ENCODE measurements at regions of chr10 and their contacts with region 1.

Region 1: GRCh38 chr10:80144067-80144695 is 11.7 kb downstream of the PLAC9 start:
- DNase-seq: peak in 1 of 9 donors; percentile 42
- ATAC-seq: peak; percentile 60
- H3K4me3 ChIP-seq: peak overlapping the region; percentile 56
- H3K4me3 Mint-ChIP-seq: peak overlapping the region; percentile 81 to 88 (median 86)
- H3K27ac ChIP-seq: peak overlapping the region; percentile 56
- H3K27ac Mint-ChIP-seq: peak overlapping the region; percentile 50 to 93 (median 71)
- H3K4me1 ChIP-seq: peaks cover 7 to 12% of the 10 kb centered on the region in 2 donors
- H3K4me1 Mint-ChIP-seq: peaks cover 14 to 25% (median 23%) of the 10 kb centered on the region in 7 donors
- H3K27me3 ChIP-seq: no peaks in the 10 kb centered on the region
- H3K27me3 Mint-ChIP-seq: peaks cover 0 to 12% (median 3%) of the 10 kb centered on the region in 5 donors

Region 2: GRCh38 chr10:79374312-79375191 is 769.6 kb before region 1 on chr10:
- CTCF ChIA-PET with region 1: interaction called, 7 read pairs
- POLR2A ChIA-PET with region 1: no interaction called
- intact Hi-C with region 1: loop called in 1 of 2 experiments (anchors 2 kb)
- DNase-seq: peak; percentile 39 to 78 (median 67)
- ATAC-seq: peak; percentile 85
- H3K4me3 ChIP-seq: no peak overlapping the region
- H3K4me3 Mint-ChIP-seq: no peak overlapping the region
- H3K27ac ChIP-seq: no peak overlapping the region
- H3K27ac Mint-ChIP-seq: peak overlapping the region in 1 of 9 donors; percentile 42
- H3K4me1 ChIP-seq: peaks cover 0 to 5% of the 10 kb centered on the region in 2 donors
- H3K4me1 Mint-ChIP-seq: peaks cover 0 to 11% (median 4%) of the 10 kb centered on the region in 7 donors
- H3K27me3 ChIP-seq: no peaks in the 10 kb centered on the region
- H3K27me3 Mint-ChIP-seq: peaks cover 0 to 30% (median 0%) of the 10 kb centered on the region in 5 donors

Region 3: DNA sequence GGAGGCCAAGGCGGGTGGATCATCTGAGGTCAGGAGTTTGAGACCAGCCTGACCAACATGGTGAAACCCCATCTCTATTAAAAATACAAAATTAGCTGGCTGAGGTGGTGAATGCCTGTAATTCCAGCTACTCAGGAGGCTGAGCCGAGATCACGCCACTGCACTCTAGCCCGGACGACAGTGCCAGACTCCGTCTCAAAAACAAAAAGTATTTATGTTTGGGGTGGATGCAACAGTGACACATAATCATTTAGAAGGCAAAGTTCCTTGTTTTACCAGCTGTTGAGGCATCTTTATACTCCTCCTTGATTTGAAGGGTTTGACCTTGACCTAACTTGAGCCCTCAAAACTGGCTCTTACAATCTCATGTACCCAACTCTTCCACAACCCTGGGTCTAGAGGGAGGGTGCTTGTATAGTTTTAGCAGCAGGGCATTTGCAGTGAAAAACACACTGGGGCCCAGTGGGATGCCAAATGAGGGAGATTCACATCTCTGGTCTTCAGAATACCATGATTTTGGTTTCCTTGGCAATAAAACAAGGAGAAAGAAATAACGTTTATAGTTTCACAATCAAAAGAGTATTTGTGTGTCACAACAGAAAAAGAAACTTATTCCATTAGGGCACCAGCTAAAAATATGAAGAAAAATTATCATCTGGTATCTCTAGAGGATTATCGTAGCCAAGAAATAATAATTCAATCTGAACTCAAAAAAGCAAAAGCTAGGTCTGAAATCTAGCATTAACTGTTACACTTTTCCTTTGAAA is 79.9 kb before region 1 on chr10:
- CTCF ChIA-PET with region 1: interaction called, 4 read pairs
- POLR2A ChIA-PET with region 1: no interaction called
- intact Hi-C with region 1: loop called in 1 of 2 experiments (anchors 2 kb)
- DNase-seq: no peak
- ATAC-seq: no peak
- H3K4me3 ChIP-seq: no peak overlapping the region
- H3K4me3 Mint-ChIP-seq: no peak overlapping the region
- H3K27ac ChIP-seq: no peak overlapping the region
- H3K27ac Mint-ChIP-seq: no peak overlapping the region
- H3K4me1 ChIP-seq: no peaks in the 10 kb centered on the region
- H3K4me1 Mint-ChIP-seq: no peaks in the 10 kb centered on the region
- H3K27me3 ChIP-seq: no peaks in the 10 kb centered on the region
- H3K27me3 Mint-ChIP-seq: peaks cover 0 to 5% (median 0%) of the 10 kb centered on the region in 5 donors

Region 4: DNA sequence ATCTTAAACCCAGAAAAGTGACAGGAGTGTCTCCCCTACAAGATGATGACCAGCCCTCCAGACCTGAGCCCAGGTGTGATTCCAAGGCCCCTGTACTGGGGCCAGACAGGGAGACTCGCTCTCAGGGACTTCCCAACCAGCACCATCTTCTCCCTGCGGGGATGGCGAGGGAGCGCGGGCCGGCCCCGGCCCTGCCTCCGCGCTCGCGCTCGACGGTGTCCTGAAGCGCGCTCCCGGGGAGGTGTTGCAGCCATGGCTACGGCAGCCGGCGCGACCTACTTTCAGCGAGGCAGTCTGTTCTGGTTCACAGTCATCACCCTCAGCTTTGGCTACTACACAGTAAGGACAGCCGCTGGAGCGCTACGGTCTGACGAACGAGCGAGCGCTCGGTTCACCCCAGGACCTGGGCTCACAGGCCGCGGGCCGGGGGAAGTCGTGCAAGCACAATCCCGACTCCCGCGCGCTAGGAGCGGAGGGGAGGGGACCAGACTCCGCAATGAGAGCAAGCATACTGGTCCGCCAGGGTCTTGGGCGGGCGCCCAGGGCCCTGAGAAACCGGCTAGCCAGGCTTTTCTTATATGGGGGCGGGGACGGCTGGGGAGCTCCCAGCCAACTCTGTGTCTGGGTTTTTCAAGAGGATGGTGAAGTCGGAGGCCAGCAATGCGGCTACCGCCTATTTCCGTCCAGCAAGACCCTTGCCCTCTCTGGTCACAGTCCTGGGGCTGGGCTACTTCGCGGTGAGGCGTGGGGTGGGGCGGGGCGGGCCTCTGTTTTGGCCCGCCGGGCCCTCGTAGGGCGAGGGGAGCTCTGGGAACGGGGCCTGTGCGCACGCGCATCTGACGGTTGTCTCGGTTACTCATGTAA is 65.5 kb before region 1 on chr10 and contains the start of gene TMEM254:
- CTCF ChIA-PET with region 1: interaction called, 3 read pairs
- POLR2A ChIA-PET with region 1: no interaction called
- intact Hi-C with region 1: loop called in 1 of 2 experiments (anchors 5 kb)
- DNase-seq: peak; percentile 79 to 87 (median 85)
- ATAC-seq: peak; percentile 87
- H3K4me3 ChIP-seq: peak within 1 kb of the TSS; percentile 88
- H3K4me3 Mint-ChIP-seq: peak within 1 kb of the TSS; percentile 90 to 100 (median 96)
- H3K27ac ChIP-seq: peak within 1 kb of the TSS; percentile 87
- H3K27ac Mint-ChIP-seq: peak within 1 kb of the TSS; percentile 88 to 99 (median 95)
- H3K4me1 ChIP-seq: peaks cover 6 to 12% of the 10 kb centered on the region in 2 donors
- H3K4me1 Mint-ChIP-seq: peaks cover 14 to 25% (median 20%) of the 10 kb centered on the region in 7 donors
- H3K27me3 ChIP-seq: no peaks in the 10 kb centered on the region
- H3K27me3 Mint-ChIP-seq: no peaks in the 10 kb centered on the region
- total RNA-seq, gene TMEM254: 7.3 to 19.6 (median 17.1) TPM

Region 5: DNA sequence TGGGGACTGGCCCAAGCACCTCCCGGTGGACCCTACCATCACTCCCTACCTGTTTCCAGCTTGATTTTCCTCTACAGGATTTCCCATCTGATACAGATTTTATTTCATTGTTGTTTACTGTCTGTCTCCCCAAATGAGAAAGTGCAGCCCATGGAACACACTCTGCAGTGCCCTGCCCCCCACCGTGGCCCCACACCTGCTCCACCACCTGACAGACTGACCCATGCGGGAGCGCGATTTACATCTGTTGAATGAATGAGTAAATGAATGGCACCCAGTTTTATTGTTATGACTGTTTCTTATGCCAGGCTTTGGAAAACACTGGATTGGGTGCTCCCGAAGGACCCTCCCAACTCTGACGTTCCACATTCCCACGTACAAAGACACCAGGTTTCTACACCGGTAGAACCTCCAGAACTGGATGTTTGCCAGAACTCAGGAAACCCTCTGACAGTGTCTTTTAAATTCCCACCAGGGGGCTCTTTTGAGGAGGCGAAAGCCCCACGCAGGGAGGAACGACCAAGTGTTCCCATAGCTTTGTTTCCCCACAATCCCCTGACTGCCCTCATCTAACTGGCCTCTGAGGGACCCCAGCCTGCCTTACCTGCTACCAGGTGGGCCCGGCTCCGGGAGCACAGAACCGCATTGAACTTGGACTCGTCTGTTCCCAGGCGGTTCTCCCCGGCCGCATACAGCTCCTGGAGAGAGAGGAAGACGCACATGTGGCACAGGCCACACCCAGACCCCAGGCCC is 17.3 kb after region 1 on chr10:
- CTCF ChIA-PET with region 1: interaction called, 4 read pairs
- POLR2A ChIA-PET with region 1: interaction called, 3 read pairs
- intact Hi-C with region 1: loop called in 1 of 2 experiments (anchors 2 kb)
- DNase-seq: peak in 3 of 9 donors; percentile 20 to 32 (median 27)
- ATAC-seq: no peak
- H3K4me3 ChIP-seq: no peak overlapping the region
- H3K4me3 Mint-ChIP-seq: no peak overlapping the region
- H3K27ac ChIP-seq: no peak overlapping the region
- H3K27ac Mint-ChIP-seq: peak overlapping the region in 8 of 9 donors; percentile 53 to 90 (median 72)
- H3K4me1 ChIP-seq: no peaks in the 10 kb centered on the region
- H3K4me1 Mint-ChIP-seq: peaks cover 0 to 38% (median 5%) of the 10 kb centered on the region in 7 donors
- H3K27me3 ChIP-seq: no peaks in the 10 kb centered on the region
- H3K27me3 Mint-ChIP-seq: no peaks in the 10 kb centered on the region

Region 6: GRCh38 chr10:80187465-80188409 is 43.6 kb after region 1 on chr10:
- CTCF ChIA-PET with region 1: interaction called, 11 read pairs
- POLR2A ChIA-PET with region 1: interaction called, 14 read pairs
- intact Hi-C with region 1: loop called (anchors 1 kb)
- DNase-seq: peak; percentile 58 to 96 (median 93)
- ATAC-seq: peak; percentile 94
- H3K4me3 ChIP-seq: peak overlapping the region; percentile 37
- H3K4me3 Mint-ChIP-seq: peak overlapping the region; percentile 77 to 95 (median 85)
- H3K27ac ChIP-seq: peak overlapping the region; percentile 84
- H3K27ac Mint-ChIP-seq: peak overlapping the region; percentile 90 to 98 (median 93)
- H3K4me1 ChIP-seq: peaks cover 48 to 81% of the 10 kb centered on the region in 2 donors
- H3K4me1 Mint-ChIP-seq: peaks cover 74 to 91% (median 90%) of the 10 kb centered on the region in 7 donors
- H3K27me3 ChIP-seq: no peaks in the 10 kb centered on the region
- H3K27me3 Mint-ChIP-seq: no peaks in the 10 kb centered on the region

Region 7: DNA sequence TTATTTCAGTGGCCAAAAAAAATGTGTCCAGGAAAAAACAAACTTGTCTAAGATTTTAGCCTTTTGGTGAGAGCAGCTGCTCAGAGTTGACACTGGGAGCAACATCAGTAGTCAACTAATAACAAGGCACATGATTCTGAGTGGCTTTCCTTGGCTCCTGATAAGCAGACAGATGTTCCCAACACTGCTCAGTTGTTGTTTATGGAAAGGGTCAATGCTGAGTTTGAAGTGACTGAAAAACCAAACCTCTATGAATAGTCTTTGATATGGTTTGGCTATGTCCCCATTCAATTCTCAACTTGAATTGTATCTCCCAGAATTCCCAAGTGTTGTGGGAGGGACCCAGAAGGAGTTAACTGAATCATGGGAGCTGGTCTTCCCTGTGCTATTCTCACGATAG is 200.1 kb after region 1 on chr10:
- CTCF ChIA-PET with region 1: no interaction called
- POLR2A ChIA-PET with region 1: no interaction called
- intact Hi-C with region 1: no loop called
- DNase-seq: no peak
- ATAC-seq: no peak
- H3K4me3 ChIP-seq: no peak overlapping the region
- H3K4me3 Mint-ChIP-seq: no peak overlapping the region
- H3K27ac ChIP-seq: no peak overlapping the region
- H3K27ac Mint-ChIP-seq: no peak overlapping the region
- H3K4me1 ChIP-seq: no peaks in the 10 kb centered on the region
- H3K4me1 Mint-ChIP-seq: no peaks in the 10 kb centered on the region
- H3K27me3 ChIP-seq: no peaks in the 10 kb centered on the region
- H3K27me3 Mint-ChIP-seq: peaks cover 0 to 8% (median 0%) of the 10 kb centered on the region in 5 donors

Measured in naive thymus-derived CD4-positive, alpha-beta T cell (primary cell).